ENCODE measurements at regions of chr2 and their contacts with region 1.

Region 1: GRCh38 chr2:233061591-233062450 is 1.7 kb downstream of the INPP5D start:
- DNase-seq: peak; percentile 70
- ATAC-seq: peak; percentile 51
- H3K4me3 Mint-ChIP-seq: peak overlapping the region; percentile 96
- H3K27ac Mint-ChIP-seq: peak overlapping the region; percentile 90
- H3K4me1 Mint-ChIP-seq: peaks cover 40% of the 10 kb centered on the region
- H3K27me3 Mint-ChIP-seq: no peaks in the 10 kb centered on the region

Region 2: GRCh38 chr2:232385660-232386489 is 675.9 kb before region 1 on chr2:
- CTCF ChIA-PET with region 1: no interaction called
- POLR2A ChIA-PET with region 1: no interaction called
- intact Hi-C with region 1: no loop called
- DNase-seq: no peak
- ATAC-seq: no peak
- H3K4me3 Mint-ChIP-seq: no peak overlapping the region
- H3K27ac Mint-ChIP-seq: no peak overlapping the region
- H3K4me1 Mint-ChIP-seq: peaks cover 2% of the 10 kb centered on the region
- H3K27me3 Mint-ChIP-seq: peaks cover 51% of the 10 kb centered on the region

Region 3: DNA sequence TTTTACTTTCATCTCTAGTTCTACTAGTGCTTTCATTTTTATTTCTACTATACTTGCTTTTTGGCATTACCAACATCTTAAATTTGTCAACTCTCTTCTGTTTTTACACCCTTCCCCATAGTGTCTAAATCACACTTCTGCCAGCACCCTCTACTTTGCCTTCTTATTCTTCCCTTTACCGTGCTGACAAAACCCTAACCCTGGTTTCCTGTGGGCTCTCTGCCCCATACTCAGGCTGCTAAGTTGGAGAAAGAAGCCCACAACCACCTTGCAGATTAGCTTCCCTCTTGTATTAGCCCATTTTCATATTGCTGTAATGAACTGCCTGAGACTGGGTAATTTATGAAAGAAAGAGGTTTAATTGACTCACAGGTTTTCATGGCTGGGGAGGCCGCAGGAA is 339.9 kb before region 1 on chr2:
- CTCF ChIA-PET with region 1: no interaction called
- POLR2A ChIA-PET with region 1: no interaction called
- intact Hi-C with region 1: no loop called
- DNase-seq: no peak
- ATAC-seq: no peak
- H3K4me3 Mint-ChIP-seq: no peak overlapping the region
- H3K27ac Mint-ChIP-seq: peak overlapping the region; percentile 63
- H3K4me1 Mint-ChIP-seq: peaks cover 19% of the 10 kb centered on the region
- H3K27me3 Mint-ChIP-seq: no peaks in the 10 kb centered on the region

Region 4: GRCh38 chr2:232887171-232887850 is 174.5 kb before region 1 on chr2:
- CTCF ChIA-PET with region 1: no interaction called
- POLR2A ChIA-PET with region 1: no interaction called
- intact Hi-C with region 1: no loop called
- DNase-seq: no peak
- ATAC-seq: no peak
- H3K4me3 Mint-ChIP-seq: no peak overlapping the region
- H3K27ac Mint-ChIP-seq: no peak overlapping the region
- H3K4me1 Mint-ChIP-seq: no peaks in the 10 kb centered on the region
- H3K27me3 Mint-ChIP-seq: peaks cover 7% of the 10 kb centered on the region

Region 5: GRCh38 chr2:233075966-233076339 is 14.1 kb after region 1 on chr2:
- CTCF ChIA-PET with region 1: interaction called, 22 read pairs
- POLR2A ChIA-PET with region 1: interaction called, 29 read pairs
- intact Hi-C with region 1: loop called (anchors 1 kb)
- DNase-seq: peak; percentile 36
- ATAC-seq: peak; percentile 40
- H3K4me3 Mint-ChIP-seq: no peak overlapping the region
- H3K27ac Mint-ChIP-seq: no peak overlapping the region
- H3K4me1 Mint-ChIP-seq: peaks cover 37% of the 10 kb centered on the region
- H3K27me3 Mint-ChIP-seq: no peaks in the 10 kb centered on the region

Region 6: DNA sequence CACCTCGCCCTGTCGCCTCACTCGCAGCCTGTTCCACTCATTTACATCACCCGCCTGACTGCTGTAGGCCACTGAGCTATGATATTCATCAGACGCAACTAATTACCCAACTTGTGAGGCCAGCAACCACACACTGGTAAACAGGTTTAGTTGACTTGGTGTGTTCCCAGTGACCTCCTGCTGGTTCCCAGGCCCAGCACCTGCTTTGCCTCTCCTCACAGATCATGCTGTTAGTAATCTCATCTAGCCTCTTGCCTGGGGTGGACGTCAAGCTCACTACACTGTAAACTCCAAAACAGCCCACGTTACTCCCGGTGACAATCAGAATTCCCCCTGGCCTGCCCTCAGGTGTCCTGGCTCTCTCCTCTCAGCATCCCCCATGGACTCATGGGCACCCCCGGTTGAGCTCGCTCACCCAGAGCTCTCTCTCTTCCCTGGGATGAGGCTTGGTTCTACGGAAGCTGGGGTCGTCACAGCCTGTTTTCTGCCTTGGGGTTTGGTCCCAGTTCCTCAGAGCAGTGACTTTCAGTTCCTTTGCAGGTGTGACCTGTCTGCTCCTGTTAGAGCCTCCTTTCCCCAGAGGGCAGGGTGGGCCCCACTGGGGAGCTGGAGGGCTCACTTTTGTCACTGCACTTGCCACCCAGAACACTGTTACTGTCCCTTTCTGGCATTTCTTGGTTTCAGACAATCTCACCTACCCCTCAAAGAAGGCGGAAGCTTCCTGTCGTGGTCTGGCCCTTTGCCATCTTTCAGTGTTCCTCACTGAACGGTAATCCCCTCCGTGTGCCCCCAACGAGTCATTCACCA is 38.6 kb after region 1 on chr2:
- CTCF ChIA-PET with region 1: interaction called, 7 read pairs
- POLR2A ChIA-PET with region 1: no interaction called
- intact Hi-C with region 1: loop called (anchors 1 to 2 kb)
- DNase-seq: peak; percentile 81
- ATAC-seq: peak; percentile 73
- H3K4me3 Mint-ChIP-seq: peak overlapping the region; percentile 24
- H3K27ac Mint-ChIP-seq: peak overlapping the region; percentile 84
- H3K4me1 Mint-ChIP-seq: peaks cover 61% of the 10 kb centered on the region
- H3K27me3 Mint-ChIP-seq: no peaks in the 10 kb centered on the region

Region 7: GRCh38 chr2:233234264-233234663 is 172.4 kb after region 1 on chr2:
- CTCF ChIA-PET with region 1: interaction called, 3 read pairs
- POLR2A ChIA-PET with region 1: interaction called, 4 read pairs
- intact Hi-C with region 1: loop called (anchors 5 kb)
- DNase-seq: peak; percentile 45
- ATAC-seq: peak; percentile 27
- H3K4me3 Mint-ChIP-seq: peak overlapping the region; percentile 16
- H3K27ac Mint-ChIP-seq: peak overlapping the region; percentile 72
- H3K4me1 Mint-ChIP-seq: peaks cover 37% of the 10 kb centered on the region
- H3K27me3 Mint-ChIP-seq: no peaks in the 10 kb centered on the region

Measured in activated CD4-positive, alpha-beta T cell treated with anti-CD3 and anti-CD28 coated beads for 36 hours (primary cell).